GM10248 (cell line): ENCODE measurements at regions of chr14 and their contacts with region 1.

Region 1: GRCh38 chr14:99995700-99996356 is 69.4 kb upstream of the EVL start:
- DNase-seq: peak; percentile 77
- CTCF ChIP-seq: peak; percentile 79

Region 2: DNA sequence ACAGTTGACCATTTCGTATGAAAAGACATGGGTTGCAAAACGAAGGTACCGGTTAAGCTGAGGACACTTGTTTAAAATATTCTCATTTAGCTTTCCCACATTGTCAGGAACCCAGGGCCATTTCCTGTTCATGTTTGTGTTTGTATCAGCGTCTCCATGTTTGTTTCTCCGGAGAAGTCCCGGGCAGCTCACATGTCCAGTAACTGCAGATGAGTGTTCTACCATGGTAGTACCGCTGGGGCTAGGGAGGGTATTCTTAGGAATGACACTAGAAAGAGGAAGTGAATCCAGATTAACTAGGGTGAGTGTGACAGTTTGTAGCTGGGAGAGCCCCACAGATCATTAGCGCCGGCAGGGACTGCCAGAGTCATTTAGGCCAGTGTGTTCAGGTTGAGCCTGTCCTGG is 19.4 kb after region 1 on chr14:
- CTCF ChIA-PET with region 1: interaction called, 11 read pairs
- POLR2A ChIA-PET with region 1: interaction called, 4 read pairs
- DNase-seq: peak; percentile 63
- CTCF ChIP-seq: no peak

Region 3: GRCh38 chr14:100246826-100247428 is 251.1 kb after region 1 on chr14:
- CTCF ChIA-PET with region 1: no interaction called
- POLR2A ChIA-PET with region 1: no interaction called
- DNase-seq: no peak
- CTCF ChIP-seq: peak; percentile 29